PC-9 (cell line): ENCODE measurements at regions of chr16 and their contacts with region 1.

Region 1: GRCh38 chr16:68528686-68529379 is 10.3 kb upstream of the ZFP90 start:
- DNase-seq: peak; percentile 62 to 81
- H3K4me3 ChIP-seq: no peak overlapping the region
- H3K27ac ChIP-seq: no peak overlapping the region
- H3K4me1 ChIP-seq: peaks cover 10% of the 10 kb centered on the region
- H3K27me3 ChIP-seq: no peaks in the 10 kb centered on the region
- CTCF ChIP-seq: peak; percentile 88

Region 2: DNA sequence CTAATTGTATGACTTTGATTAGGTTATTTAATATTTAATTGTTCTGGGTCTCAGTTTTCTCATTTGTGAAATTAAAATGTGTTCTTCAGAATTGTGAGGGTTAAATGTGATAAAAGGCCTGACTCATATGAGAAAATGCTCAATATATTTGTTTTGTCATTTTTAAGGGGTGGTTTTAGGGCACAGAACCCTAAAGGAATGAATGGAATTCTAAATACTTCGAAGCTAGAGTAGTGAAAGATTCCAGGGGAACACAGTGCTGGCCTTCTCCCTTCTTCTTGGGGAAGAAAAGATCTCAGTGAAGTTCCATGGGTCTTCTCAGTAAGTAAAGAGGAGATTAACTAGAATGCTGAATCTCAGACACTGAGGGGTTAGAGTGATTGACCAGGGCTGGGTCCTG is 76.7 kb before region 1 on chr16:
- CTCF ChIA-PET with region 1: no interaction called
- POLR2A ChIA-PET with region 1: no interaction called
- intact Hi-C with region 1: no loop called
- DNase-seq: peak in 1 of 2 experiments; percentile 73
- H3K4me3 ChIP-seq: no peak overlapping the region
- H3K27ac ChIP-seq: peak overlapping the region; percentile 49
- H3K4me1 ChIP-seq: peaks cover 30% of the 10 kb centered on the region
- H3K27me3 ChIP-seq: no peaks in the 10 kb centered on the region
- CTCF ChIP-seq: no peak

Region 3: DNA sequence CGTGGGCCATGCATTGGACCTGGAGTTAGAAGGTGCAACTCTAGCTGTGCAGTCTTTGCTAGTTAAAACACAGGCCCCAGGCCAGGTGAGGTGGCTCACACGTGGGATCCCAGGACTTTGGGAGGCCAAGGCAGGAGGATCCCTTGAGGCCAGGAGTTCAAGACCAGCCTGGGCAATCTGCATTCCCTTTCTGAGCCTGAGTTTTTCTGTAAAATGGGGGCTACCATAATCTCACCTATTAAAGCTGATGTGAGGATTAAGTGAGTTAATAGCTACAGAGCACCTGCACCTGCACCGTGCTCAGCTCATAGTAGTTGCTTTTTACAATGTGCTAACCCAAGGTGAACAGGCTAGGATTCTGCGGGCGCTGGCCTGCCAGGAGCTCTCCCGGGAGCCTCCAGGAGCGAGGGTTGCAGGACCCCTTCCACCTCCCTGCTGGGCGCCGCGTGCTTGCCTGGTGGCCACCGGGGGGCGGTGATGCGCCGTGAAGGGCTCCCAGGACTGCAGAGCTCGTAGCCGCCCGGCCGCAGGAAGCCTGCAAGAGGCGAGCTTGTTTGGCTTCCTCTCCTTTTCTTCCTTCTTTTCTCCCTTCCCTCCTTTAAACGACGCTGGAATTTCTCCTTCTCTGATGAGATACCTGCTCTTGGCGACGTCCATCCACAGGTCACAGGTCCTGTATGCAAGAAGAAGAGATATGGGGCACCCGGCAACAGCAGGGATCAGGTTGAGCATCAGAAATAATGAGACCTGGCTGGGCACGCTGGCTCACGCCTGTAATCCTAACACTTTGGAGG is 61.6 kb after region 1 on chr16:
- CTCF ChIA-PET with region 1: interaction called, 3 read pairs
- POLR2A ChIA-PET with region 1: no interaction called
- intact Hi-C with region 1: loop called (anchors 2 kb)
- DNase-seq: peak; percentile 46 to 79
- H3K4me3 ChIP-seq: no peak overlapping the region
- H3K27ac ChIP-seq: no peak overlapping the region
- H3K4me1 ChIP-seq: no peaks in the 10 kb centered on the region
- H3K27me3 ChIP-seq: no peaks in the 10 kb centered on the region
- CTCF ChIP-seq: peak; percentile 92

Region 4: GRCh38 chr16:69123910-69124309 is 595.1 kb after region 1 on chr16:
- CTCF ChIA-PET with region 1: interaction called, 8 read pairs
- POLR2A ChIA-PET with region 1: no interaction called
- intact Hi-C with region 1: loop called (anchors 1 kb)
- DNase-seq: peak; percentile 47 to 62
- H3K4me3 ChIP-seq: no peak overlapping the region
- H3K27ac ChIP-seq: no peak overlapping the region
- H3K4me1 ChIP-seq: no peaks in the 10 kb centered on the region
- H3K27me3 ChIP-seq: no peaks in the 10 kb centered on the region
- CTCF ChIP-seq: peak; percentile 87